ENCODE measurements at regions of chr7 and their contacts with region 1.

Region 1: GRCh38 chr7:25389489-25390106 is 161.3 kb upstream of the NPVF start:
- DNase-seq: no peak
- ATAC-seq: peak; percentile 24
- H3K4me3 ChIP-seq: no peak overlapping the region
- H3K27ac ChIP-seq: no peak overlapping the region
- H3K4me1 ChIP-seq: no peaks in the 10 kb centered on the region
- H3K27me3 ChIP-seq: no peaks in the 10 kb centered on the region
- CTCF ChIP-seq: peak; percentile 46

Region 2: DNA sequence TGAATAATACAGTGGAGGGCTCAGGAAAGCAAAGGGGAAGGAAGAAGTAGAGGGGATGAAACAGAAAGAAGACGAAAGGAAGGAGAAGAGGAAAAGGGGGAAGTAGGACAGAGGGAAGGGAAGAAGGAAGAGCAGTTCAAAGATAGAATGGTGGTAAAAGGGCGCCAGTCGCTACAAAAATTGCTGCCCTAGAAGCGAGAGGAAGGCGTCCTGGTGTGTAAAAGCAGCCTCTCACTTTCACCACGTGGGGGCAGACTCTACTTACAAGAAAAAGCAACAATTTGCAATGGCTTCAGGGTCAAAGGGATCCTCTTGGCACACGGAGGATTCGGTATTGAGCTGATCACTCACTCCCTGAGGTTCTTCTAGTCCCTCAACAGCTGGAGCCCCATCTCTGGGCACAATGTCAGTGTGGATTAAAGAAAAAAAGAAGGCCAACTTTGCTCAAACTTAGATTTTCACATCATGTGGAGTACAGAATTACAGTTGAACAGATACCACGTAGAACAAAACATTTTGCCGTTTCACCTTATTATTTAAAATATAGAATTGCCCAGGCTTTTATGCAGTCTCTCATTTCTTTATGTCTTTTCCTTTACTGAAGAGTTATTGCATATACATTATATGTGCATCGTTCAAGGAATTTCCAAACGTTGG is 129.9 kb before region 1 on chr7:
- intact Hi-C with region 1: loop called (anchors 5 kb)
- DNase-seq: no peak
- ATAC-seq: peak; percentile 90
- H3K4me3 ChIP-seq: no peak overlapping the region
- H3K27ac ChIP-seq: no peak overlapping the region
- H3K4me1 ChIP-seq: no peaks in the 10 kb centered on the region
- H3K27me3 ChIP-seq: no peaks in the 10 kb centered on the region
- CTCF ChIP-seq: peak; percentile 85

Region 3: GRCh38 chr7:25565949-25566348 is 176.4 kb after region 1 on chr7:
- intact Hi-C with region 1: loop called (anchors 5 kb)
- DNase-seq: no peak
- ATAC-seq: peak; percentile 75
- H3K4me3 ChIP-seq: no peak overlapping the region
- H3K27ac ChIP-seq: no peak overlapping the region
- H3K4me1 ChIP-seq: no peaks in the 10 kb centered on the region
- H3K27me3 ChIP-seq: no peaks in the 10 kb centered on the region
- CTCF ChIP-seq: peak; percentile 100

Region 4: GRCh38 chr7:25851332-25852210 is 462.0 kb after region 1 on chr7:
- intact Hi-C with region 1: loop called (anchors 5 kb)
- DNase-seq: peak; percentile 86
- ATAC-seq: peak; percentile 91
- H3K4me3 ChIP-seq: no peak overlapping the region
- H3K27ac ChIP-seq: peak overlapping the region; percentile 26
- H3K4me1 ChIP-seq: peaks cover 42% of the 10 kb centered on the region
- H3K27me3 ChIP-seq: peaks cover 73% of the 10 kb centered on the region
- CTCF ChIP-seq: peak; percentile 83

Region 5: DNA sequence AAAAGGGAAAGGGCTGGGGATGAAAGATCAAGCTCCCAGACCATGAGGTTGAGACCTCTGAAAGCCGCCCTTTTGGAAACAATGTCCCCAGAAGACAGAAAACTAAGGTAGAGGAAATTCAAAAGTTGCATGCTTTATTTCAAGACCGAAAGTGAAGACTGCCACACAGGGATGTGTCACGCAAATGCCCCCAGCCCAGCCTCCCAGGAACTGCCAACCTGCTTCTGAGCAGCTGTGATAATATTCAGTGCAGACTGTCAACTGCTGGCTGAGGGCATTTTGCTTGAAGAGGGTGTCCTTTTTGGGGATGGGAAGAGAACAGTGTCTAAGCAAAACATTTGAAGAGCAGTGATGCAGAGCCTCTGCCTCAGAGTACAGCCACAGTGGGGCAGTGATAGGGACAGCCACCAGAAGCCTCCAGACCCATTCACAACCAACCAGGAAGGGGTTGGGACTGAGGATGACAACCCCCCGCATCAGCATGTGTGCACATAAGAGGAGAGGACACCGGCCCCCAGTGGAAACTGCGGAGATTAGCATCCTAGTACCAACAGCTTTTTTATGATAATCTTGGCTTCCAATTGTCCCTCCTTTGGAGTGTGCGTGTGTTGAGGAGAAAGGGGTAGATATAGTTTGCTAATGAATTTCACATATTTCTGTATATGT is 727.7 kb after region 1 on chr7:
- intact Hi-C with region 1: no loop called
- DNase-seq: no peak
- ATAC-seq: no peak
- H3K4me3 ChIP-seq: no peak overlapping the region
- H3K27ac ChIP-seq: no peak overlapping the region
- H3K4me1 ChIP-seq: no peaks in the 10 kb centered on the region
- H3K27me3 ChIP-seq: peaks cover 11% of the 10 kb centered on the region
- CTCF ChIP-seq: no peak